Vagina (tissue), 2 donors: ENCODE measurements at regions of chr19 and their contacts with region 1.

Region 1: DNA sequence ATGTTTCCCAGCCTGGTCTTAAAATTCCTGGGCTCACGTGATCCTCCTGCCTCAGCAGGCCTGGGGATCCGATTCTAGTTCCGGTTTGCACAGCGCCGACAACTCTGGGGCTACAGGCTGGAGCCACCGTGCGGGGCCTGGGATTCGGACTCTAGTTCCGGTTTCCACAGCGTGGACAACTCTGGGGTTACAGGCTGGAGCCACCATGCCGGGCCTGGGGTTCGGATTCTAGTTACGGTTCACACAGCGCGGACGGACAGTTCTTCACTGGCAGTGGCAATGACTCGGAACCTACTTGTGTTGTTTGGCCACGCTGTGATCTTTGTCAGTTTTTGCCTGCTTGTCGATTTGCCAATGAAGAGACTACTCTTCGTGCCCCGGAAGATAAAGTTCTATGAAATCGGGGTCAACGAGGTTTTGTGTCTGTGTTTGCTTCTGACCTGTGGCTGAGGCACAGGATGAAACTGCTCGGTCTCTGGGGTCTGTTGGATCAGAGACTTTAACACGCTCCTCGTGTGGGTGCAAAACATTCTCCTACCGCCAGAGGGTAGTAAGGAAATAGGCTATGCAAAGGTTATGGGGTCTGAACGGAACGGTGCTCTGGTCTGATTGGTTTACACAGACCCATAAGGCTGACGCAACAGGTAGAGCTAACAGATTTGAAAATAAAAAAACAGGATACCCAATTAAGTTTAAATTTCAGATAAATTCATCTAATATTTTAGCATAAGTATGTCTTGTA is 12.1 kb upstream of the ZSCAN1 start:
- DNase-seq: no peak
- H3K4me3 ChIP-seq: no peak overlapping the region
- H3K27ac ChIP-seq: no peak overlapping the region
- H3K4me1 ChIP-seq: no peaks in the 10 kb centered on the region
- H3K27me3 ChIP-seq: no peaks in the 10 kb centered on the region
- CTCF ChIP-seq: peak; percentile 30 to 71 (median 58)
- POLR2A ChIP-seq: no peak

Region 2: GRCh38 chr19:58154679-58155648 is 133.3 kb after region 1 on chr19:
- intact Hi-C with region 1: loop called (anchors 5 kb)
- DNase-seq: peak; percentile 90 to 96
- H3K4me3 ChIP-seq: peak overlapping the region; percentile 61 to 97
- H3K27ac ChIP-seq: peak overlapping the region; percentile 91
- H3K4me1 ChIP-seq: peaks cover 36% of the 10 kb centered on the region
- H3K27me3 ChIP-seq: no peaks in the 10 kb centered on the region
- CTCF ChIP-seq: peak; percentile 99 to 100 (median 100)
- POLR2A ChIP-seq: peak in 1 of 2 donors; percentile 31